PC-9 (cell line): ENCODE measurements at regions of chr15 and their contacts with region 1.

Region 1: DNA sequence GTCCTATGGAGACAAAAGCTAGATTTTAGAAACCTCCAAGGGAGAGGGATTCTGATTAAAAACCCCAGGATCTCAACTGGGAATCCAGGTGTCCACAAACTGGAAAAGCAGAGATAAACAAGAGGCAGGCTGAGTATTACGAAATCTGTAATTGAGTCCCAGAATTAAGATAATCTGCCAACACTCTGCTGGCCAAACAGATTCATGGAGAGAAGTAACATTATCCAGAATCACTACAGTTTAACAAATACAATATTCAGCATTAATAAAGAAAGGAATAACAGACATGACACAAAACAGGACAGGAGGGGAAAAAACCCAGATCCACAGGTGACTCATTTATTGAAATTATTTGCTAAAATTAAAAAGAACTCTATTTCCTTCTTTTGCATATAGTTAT is 227.2 kb upstream of the NANOGP8 start:
- DNase-seq: no peak
- H3K4me3 ChIP-seq: no peak overlapping the region
- H3K27ac ChIP-seq: no peak overlapping the region
- H3K4me1 ChIP-seq: peaks cover under 1% of the 10 kb centered on the region; the same call in 1 of the 2 replicates
- H3K27me3 ChIP-seq: no peaks in the 10 kb centered on the region
- CTCF ChIP-seq: no peak

Region 2: GRCh38 chr15:33623010-33623409 is 1689.3 kb before region 1 on chr15:
- CTCF ChIA-PET with region 1: no interaction called
- POLR2A ChIA-PET with region 1: no interaction called
- intact Hi-C with region 1: no loop called
- DNase-seq: no peak
- H3K4me3 ChIP-seq: no peak overlapping the region
- H3K27ac ChIP-seq: no peak overlapping the region
- H3K4me1 ChIP-seq: no peaks in the 10 kb centered on the region
- H3K27me3 ChIP-seq: no peaks in the 10 kb centered on the region
- CTCF ChIP-seq: no peak

Region 3: GRCh38 chr15:34900748-34901147 is 411.6 kb before region 1 on chr15:
- CTCF ChIA-PET with region 1: no interaction called
- POLR2A ChIA-PET with region 1: no interaction called
- intact Hi-C with region 1: no loop called
- DNase-seq: no peak
- H3K4me3 ChIP-seq: no peak overlapping the region
- H3K27ac ChIP-seq: no peak overlapping the region
- H3K4me1 ChIP-seq: no peaks in the 10 kb centered on the region
- H3K27me3 ChIP-seq: no peaks in the 10 kb centered on the region
- CTCF ChIP-seq: no peak

Region 4: GRCh38 chr15:35260941-35261340 is 51.4 kb before region 1 on chr15:
- CTCF ChIA-PET with region 1: interaction called, 12 read pairs
- POLR2A ChIA-PET with region 1: no interaction called
- intact Hi-C with region 1: no loop called
- DNase-seq: no peak
- H3K4me3 ChIP-seq: no peak overlapping the region
- H3K27ac ChIP-seq: no peak overlapping the region
- H3K4me1 ChIP-seq: no peaks in the 10 kb centered on the region
- H3K27me3 ChIP-seq: no peaks in the 10 kb centered on the region
- CTCF ChIP-seq: no peak